PC-3 (cell line): ENCODE measurements at regions of chr7 and their contacts with region 1.

Region 1: DNA sequence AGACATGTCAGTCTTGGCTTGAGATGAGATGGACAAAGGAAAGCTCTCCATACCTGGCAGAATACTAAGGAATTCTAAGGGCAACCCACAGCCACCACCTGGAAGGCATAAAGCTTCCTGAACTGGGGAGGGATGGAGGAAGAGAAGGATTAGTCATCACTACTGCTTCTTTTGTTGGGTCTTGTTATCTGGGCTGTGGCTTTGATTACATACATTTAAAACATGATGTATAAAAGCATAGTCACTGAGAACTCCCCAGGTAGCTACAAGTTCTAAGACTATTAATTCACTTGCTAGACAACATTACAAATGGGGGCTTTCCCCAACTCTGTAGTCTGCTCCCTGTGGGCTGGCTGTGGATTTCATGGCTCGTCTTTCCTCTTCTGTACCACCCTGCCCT is 58.2 kb downstream of the RBM33 start:
- DNase-seq: peak; percentile 82
- ATAC-seq: peak; percentile 97
- H3K4me3 ChIP-seq: no peak overlapping the region
- H3K27ac ChIP-seq: peak overlapping the region; percentile 59
- H3K4me1 ChIP-seq: peaks cover 16% of the 10 kb centered on the region
- H3K27me3 ChIP-seq: no peaks in the 10 kb centered on the region
- CTCF ChIP-seq: no peak

Region 2: GRCh38 chr7:155644178-155644970 is 58.2 kb before region 1 on chr7 and contains the start of gene RBM33:
- CTCF ChIA-PET with region 1: no interaction called
- POLR2A ChIA-PET with region 1: no interaction called
- intact Hi-C with region 1: loop called (anchors 5 kb)
- DNase-seq: peak; percentile 77
- ATAC-seq: peak; percentile 72
- H3K4me3 ChIP-seq: peak within 1 kb of the TSS; percentile 87
- H3K27ac ChIP-seq: peak within 1 kb of the TSS; percentile 75
- H3K4me1 ChIP-seq: peaks cover 12% of the 10 kb centered on the region
- H3K27me3 ChIP-seq: no peaks in the 10 kb centered on the region
- CTCF ChIP-seq: no peak
- total RNA-seq, gene RBM33: 25.3 and 31.2 TPM in 2 replicates

Region 3: GRCh38 chr7:155665957-155666287 is 36.7 kb before region 1 on chr7:
- CTCF ChIA-PET with region 1: no interaction called
- POLR2A ChIA-PET with region 1: no interaction called
- intact Hi-C with region 1: loop called (anchors 5 kb)
- DNase-seq: peak; percentile 78
- ATAC-seq: peak; percentile 96
- H3K4me3 ChIP-seq: no peak overlapping the region
- H3K27ac ChIP-seq: peak overlapping the region; percentile 54
- H3K4me1 ChIP-seq: peaks cover 20% of the 10 kb centered on the region
- H3K27me3 ChIP-seq: no peaks in the 10 kb centered on the region
- CTCF ChIP-seq: no peak

Region 4: DNA sequence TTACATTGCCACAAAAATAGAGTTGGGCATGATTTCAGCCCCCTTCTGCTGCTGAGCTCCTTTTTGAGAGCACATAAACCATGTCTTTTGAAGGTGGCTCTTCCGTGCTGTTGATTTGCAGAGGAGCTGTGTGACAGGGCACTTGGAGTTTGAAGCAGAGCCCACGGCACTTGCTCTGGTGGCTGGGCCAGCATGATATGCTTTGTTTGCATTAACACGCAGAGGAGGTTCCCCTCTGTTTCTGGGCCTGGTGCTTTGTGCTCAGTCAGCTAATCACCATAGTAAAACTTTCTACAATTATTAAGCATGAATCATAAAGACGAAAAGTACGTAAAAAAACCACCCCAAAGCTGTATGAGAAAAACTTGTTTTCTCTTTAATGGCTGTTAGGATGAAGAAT is 18.1 kb before region 1 on chr7:
- CTCF ChIA-PET with region 1: interaction called, 16 read pairs
- POLR2A ChIA-PET with region 1: no interaction called
- intact Hi-C with region 1: no loop called
- DNase-seq: no peak
- ATAC-seq: peak; percentile 46
- H3K4me3 ChIP-seq: no peak overlapping the region
- H3K27ac ChIP-seq: no peak overlapping the region
- H3K4me1 ChIP-seq: no peaks in the 10 kb centered on the region
- H3K27me3 ChIP-seq: no peaks in the 10 kb centered on the region
- CTCF ChIP-seq: no peak

Region 5: GRCh38 chr7:156147104-156147503 is 444.5 kb after region 1 on chr7:
- CTCF ChIA-PET with region 1: no interaction called
- POLR2A ChIA-PET with region 1: no interaction called
- intact Hi-C with region 1: no loop called
- DNase-seq: no peak
- ATAC-seq: no peak
- H3K4me3 ChIP-seq: no peak overlapping the region
- H3K27ac ChIP-seq: no peak overlapping the region
- H3K4me1 ChIP-seq: no peaks in the 10 kb centered on the region
- H3K27me3 ChIP-seq: peaks cover 53% of the 10 kb centered on the region
- CTCF ChIP-seq: no peak